Gastrocnemius medialis (tissue), 4 donors: ENCODE measurements at regions of chr7 and their contacts with region 1.

Region 1: DNA sequence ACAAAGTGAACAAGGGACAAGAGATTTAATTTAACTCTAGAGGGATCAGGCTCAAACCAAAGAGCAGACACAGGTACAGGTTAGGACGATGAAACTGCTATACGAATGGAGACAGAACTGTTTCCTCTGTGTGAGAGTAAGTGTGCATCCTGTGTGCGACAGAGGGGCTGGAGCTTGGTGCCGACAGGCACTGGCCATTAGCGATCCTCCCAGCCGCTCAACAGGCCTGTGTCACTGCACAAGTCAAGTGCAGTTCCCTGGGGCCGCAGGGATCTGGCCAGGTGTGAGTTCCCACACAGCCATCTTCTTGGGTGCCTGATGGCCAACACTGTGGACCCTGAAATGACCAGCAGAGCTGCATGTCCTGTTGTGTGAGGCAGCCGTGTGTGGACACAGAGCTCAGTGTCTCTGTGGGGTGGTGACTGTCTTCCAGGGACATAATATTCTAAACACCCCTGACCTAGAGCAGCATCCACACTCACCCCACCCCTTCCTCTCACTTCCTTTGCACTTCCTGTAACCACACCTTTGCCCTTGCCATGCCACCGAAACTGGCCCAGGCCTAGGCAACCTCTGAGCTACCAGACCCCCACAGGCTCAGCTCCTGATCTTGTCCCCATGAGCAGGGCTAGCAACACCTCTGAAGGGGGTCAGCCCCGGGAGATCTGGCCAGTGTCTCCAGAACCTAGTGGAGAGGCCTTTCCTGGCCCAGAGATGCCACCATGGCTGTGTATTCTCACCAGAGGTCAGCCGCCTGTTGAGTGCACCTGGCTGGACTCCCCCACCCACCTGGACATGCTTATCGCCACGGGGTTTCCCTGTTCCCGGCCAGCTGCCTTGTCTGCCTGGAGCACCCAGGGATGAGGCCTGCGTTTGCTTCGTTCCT is 11.7 kb upstream of the TBRG4 start:
- DNase-seq: no peak
- ATAC-seq: no peak
- H3K4me3 ChIP-seq: no peak overlapping the region
- H3K27ac ChIP-seq: no peak overlapping the region
- H3K4me1 ChIP-seq: no peaks in the 10 kb centered on the region
- H3K27me3 ChIP-seq: no peaks in the 10 kb centered on the region
- CTCF ChIP-seq: no peak
- POLR2A ChIP-seq: no peak

Region 2: GRCh38 chr7:44638611-44639557 is 484.3 kb before region 1 on chr7:
- in situ Hi-C with region 1: no loop called
- intact Hi-C with region 1: no loop called
- DNase-seq: peak in 1 of 2 donors; percentile 77
- ATAC-seq: peak in 1 of 2 donors; percentile 23
- H3K4me3 ChIP-seq: no peak overlapping the region
- H3K27ac ChIP-seq: peak overlapping the region; percentile 85 to 94 (median 92)
- H3K4me1 ChIP-seq: peaks cover 71 to 78% of the 10 kb centered on the region in 2 donors
- H3K27me3 ChIP-seq: no peaks in the 10 kb centered on the region
- CTCF ChIP-seq: no peak
- POLR2A ChIP-seq: peak; percentile 10 to 35

Region 3: DNA sequence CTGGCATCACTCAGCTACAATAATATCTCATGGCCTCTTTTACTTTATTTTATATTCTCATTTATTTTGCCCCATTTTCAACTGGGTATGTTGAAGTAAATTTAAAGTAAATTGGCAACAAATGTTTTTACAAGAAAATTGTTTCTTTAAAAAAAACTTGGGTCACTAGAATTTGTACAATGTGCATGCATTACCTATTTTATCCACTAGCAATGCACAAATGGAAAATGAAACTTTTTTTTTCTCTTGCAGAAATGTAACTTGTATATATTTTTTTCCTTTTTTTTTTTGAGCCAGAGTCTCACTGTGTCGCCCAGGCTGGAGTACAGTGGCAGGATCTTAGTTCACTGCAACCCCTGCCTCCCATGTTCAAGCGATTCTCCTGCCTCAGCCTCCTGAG is 265.1 kb before region 1 on chr7:
- in situ Hi-C with region 1: loop called in 2 of 4 experiments (anchors 10 to 25 kb)
- intact Hi-C with region 1: no loop called
- DNase-seq: no peak
- ATAC-seq: no peak
- H3K4me3 ChIP-seq: no peak overlapping the region
- H3K27ac ChIP-seq: no peak overlapping the region
- H3K4me1 ChIP-seq: no peaks in the 10 kb centered on the region
- H3K27me3 ChIP-seq: no peaks in the 10 kb centered on the region
- CTCF ChIP-seq: no peak
- POLR2A ChIP-seq: no peak